ENCODE measurements at regions of chr11 and their contacts with region 1.

Region 1: GRCh38 chr11:116927163-116927974 is 89.9 kb upstream of the APOA1 start:
- DNase-seq: peak; percentile 16 to 77 (median 38)
- ATAC-seq: peak; percentile 43
- H3K4me3 ChIP-seq: no peak overlapping the region
- H3K4me3 Mint-ChIP-seq: peak overlapping the region; percentile 43
- H3K27ac ChIP-seq: peak overlapping the region; percentile 79 to 94
- H3K27ac Mint-ChIP-seq: peak overlapping the region; percentile 90
- H3K4me1 ChIP-seq: peaks cover 68% of the 10 kb centered on the region
- H3K4me1 Mint-ChIP-seq: peaks cover 91% of the 10 kb centered on the region
- H3K27me3 ChIP-seq: no peaks in the 10 kb centered on the region
- H3K27me3 Mint-ChIP-seq: no peaks in the 10 kb centered on the region
- CTCF ChIP-seq: peak; percentile 56

Region 2: GRCh38 chr11:116742104-116742503 is 185.3 kb before region 1 on chr11:
- CTCF ChIA-PET with region 1: no interaction called
- POLR2A ChIA-PET with region 1: no interaction called
- intact Hi-C with region 1: no loop called
- DNase-seq: no peak
- ATAC-seq: no peak
- H3K4me3 ChIP-seq: no peak overlapping the region
- H3K4me3 Mint-ChIP-seq: no peak overlapping the region
- H3K27ac ChIP-seq: no peak overlapping the region
- H3K27ac Mint-ChIP-seq: no peak overlapping the region
- H3K4me1 ChIP-seq: no peaks in the 10 kb centered on the region
- H3K4me1 Mint-ChIP-seq: no peaks in the 10 kb centered on the region
- H3K27me3 ChIP-seq: no peaks in the 10 kb centered on the region
- H3K27me3 Mint-ChIP-seq: no peaks in the 10 kb centered on the region
- CTCF ChIP-seq: no peak

Region 3: DNA sequence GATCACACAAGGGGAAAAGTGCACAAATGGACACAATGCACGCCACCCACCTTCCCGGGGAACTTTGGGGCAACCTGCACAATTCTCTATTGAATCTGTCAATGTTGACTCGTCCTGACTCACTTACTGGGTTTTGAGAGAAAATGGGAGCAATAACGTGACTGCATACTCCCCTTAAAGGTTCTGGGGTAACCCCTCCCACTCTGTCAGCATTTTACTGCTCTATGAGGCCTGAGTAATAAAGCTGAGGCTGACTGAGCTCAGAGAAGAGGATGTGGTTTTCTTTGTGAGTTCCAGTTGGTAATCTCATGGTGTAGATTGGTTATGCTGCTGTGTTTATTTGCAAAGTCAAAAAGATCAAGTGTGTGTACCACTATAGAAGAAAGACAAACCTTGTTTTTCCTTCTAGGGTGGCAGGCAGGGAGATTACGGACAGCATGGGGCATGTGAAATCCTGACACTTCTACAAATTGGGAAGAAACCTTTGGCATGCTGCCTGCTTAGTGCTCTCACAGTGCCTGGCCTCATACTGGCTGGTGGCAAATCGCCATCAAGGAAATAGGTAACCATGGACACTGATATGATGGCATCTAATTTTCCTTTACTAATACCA is 73.8 kb before region 1 on chr11:
- CTCF ChIA-PET with region 1: no interaction called
- POLR2A ChIA-PET with region 1: interaction called, 7 read pairs
- intact Hi-C with region 1: loop called in 1 of 2 experiments (anchors 10 kb)
- DNase-seq: peak in 12 of 14 experiments; percentile 15 to 93 (median 52)
- ATAC-seq: peak; percentile 95
- H3K4me3 ChIP-seq: peak overlapping the region; percentile 13
- H3K4me3 Mint-ChIP-seq: peak overlapping the region; percentile 18
- H3K27ac ChIP-seq: peak overlapping the region; percentile 69 to 82
- H3K27ac Mint-ChIP-seq: peak overlapping the region; percentile 82
- H3K4me1 ChIP-seq: peaks cover 68% of the 10 kb centered on the region
- H3K4me1 Mint-ChIP-seq: peaks cover 74% of the 10 kb centered on the region
- H3K27me3 ChIP-seq: no peaks in the 10 kb centered on the region
- H3K27me3 Mint-ChIP-seq: no peaks in the 10 kb centered on the region
- CTCF ChIP-seq: no peak

Region 4: GRCh38 chr11:116972691-116973090 is 45.3 kb after region 1 on chr11:
- CTCF ChIA-PET with region 1: no interaction called
- POLR2A ChIA-PET with region 1: no interaction called
- intact Hi-C with region 1: loop called in 1 of 2 experiments (anchors 5 kb)
- DNase-seq: no peak
- ATAC-seq: no peak
- H3K4me3 ChIP-seq: no peak overlapping the region
- H3K4me3 Mint-ChIP-seq: no peak overlapping the region
- H3K27ac ChIP-seq: no peak overlapping the region
- H3K27ac Mint-ChIP-seq: no peak overlapping the region
- H3K4me1 ChIP-seq: no peaks in the 10 kb centered on the region
- H3K4me1 Mint-ChIP-seq: peaks cover 59% of the 10 kb centered on the region
- H3K27me3 ChIP-seq: no peaks in the 10 kb centered on the region
- H3K27me3 Mint-ChIP-seq: no peaks in the 10 kb centered on the region
- CTCF ChIP-seq: no peak

Region 5: DNA sequence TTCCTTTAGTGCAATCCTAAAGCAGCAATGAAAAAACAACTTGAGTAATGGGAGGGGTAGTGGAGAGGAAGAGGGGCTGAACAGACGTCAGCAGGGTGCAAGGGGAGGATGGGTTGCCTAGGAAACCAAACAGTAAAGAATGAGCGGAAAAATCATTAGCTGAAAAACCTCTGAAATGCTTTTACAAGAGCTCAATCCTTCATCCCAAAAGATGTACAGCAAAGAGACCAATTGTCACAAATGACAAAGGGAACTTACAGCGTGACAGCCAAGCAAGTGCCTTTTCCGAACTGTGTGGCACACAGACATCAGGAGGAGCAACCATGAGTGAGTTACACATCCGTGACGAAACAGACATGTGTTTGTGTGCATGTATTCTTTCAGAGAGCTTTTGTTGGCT is 66.2 kb after region 1 on chr11:
- CTCF ChIA-PET with region 1: interaction called, 3 read pairs
- POLR2A ChIA-PET with region 1: interaction called, 4 read pairs
- intact Hi-C with region 1: loop called in 1 of 2 experiments (anchors 5 kb)
- DNase-seq: peak in 9 of 14 experiments; percentile 4 to 82 (median 21)
- ATAC-seq: peak; percentile 74
- H3K4me3 ChIP-seq: no peak overlapping the region
- H3K4me3 Mint-ChIP-seq: peak overlapping the region; percentile 47
- H3K27ac ChIP-seq: no peak overlapping the region
- H3K27ac Mint-ChIP-seq: peak overlapping the region; percentile 73
- H3K4me1 ChIP-seq: peaks cover 34% of the 10 kb centered on the region
- H3K4me1 Mint-ChIP-seq: peaks cover 66% of the 10 kb centered on the region
- H3K27me3 ChIP-seq: no peaks in the 10 kb centered on the region
- H3K27me3 Mint-ChIP-seq: no peaks in the 10 kb centered on the region
- CTCF ChIP-seq: no peak

Region 6: DNA sequence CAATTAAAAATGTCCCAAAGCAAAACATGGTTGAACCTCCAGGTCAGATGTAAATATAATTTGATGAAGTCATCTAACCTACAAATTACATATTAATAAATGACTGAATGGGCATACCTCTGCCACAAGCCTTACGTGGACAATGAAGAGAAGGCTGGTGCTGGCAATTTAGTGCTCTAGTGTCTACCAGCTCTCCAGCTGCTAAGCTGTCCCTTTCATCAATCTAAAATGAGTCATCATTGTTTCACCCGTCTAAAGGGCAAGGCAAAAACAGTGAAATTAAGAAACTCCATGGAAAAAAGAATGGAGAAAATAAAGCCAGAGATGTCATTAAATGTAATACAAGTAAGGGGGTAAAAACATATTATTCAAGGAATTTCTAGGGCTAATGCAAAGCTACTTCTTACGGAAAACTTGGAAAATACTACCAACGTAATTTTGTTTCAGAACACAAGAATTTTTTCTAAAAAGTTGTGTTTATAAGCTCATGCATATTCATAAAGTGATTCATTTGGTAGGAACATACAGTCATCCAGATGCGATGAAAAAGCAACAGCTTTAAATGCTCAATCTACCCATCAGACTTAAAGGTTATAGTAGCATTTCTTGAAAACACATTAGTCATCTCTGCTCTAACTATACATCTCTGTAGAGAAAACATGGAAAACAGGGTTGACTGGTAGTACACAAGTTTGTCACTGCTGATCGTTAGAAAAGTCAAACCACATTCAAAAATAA is 99.4 kb after region 1 on chr11:
- CTCF ChIA-PET with region 1: interaction called, 3 read pairs
- POLR2A ChIA-PET with region 1: interaction called, 3 read pairs
- intact Hi-C with region 1: loop called in 1 of 2 experiments (anchors 5 kb)
- DNase-seq: no peak
- ATAC-seq: no peak
- H3K4me3 ChIP-seq: no peak overlapping the region
- H3K4me3 Mint-ChIP-seq: no peak overlapping the region
- H3K27ac ChIP-seq: no peak overlapping the region
- H3K27ac Mint-ChIP-seq: no peak overlapping the region
- H3K4me1 ChIP-seq: peaks cover 28% of the 10 kb centered on the region
- H3K4me1 Mint-ChIP-seq: peaks cover 67% of the 10 kb centered on the region
- H3K27me3 ChIP-seq: no peaks in the 10 kb centered on the region
- H3K27me3 Mint-ChIP-seq: no peaks in the 10 kb centered on the region
- CTCF ChIP-seq: no peak

Region 7: DNA sequence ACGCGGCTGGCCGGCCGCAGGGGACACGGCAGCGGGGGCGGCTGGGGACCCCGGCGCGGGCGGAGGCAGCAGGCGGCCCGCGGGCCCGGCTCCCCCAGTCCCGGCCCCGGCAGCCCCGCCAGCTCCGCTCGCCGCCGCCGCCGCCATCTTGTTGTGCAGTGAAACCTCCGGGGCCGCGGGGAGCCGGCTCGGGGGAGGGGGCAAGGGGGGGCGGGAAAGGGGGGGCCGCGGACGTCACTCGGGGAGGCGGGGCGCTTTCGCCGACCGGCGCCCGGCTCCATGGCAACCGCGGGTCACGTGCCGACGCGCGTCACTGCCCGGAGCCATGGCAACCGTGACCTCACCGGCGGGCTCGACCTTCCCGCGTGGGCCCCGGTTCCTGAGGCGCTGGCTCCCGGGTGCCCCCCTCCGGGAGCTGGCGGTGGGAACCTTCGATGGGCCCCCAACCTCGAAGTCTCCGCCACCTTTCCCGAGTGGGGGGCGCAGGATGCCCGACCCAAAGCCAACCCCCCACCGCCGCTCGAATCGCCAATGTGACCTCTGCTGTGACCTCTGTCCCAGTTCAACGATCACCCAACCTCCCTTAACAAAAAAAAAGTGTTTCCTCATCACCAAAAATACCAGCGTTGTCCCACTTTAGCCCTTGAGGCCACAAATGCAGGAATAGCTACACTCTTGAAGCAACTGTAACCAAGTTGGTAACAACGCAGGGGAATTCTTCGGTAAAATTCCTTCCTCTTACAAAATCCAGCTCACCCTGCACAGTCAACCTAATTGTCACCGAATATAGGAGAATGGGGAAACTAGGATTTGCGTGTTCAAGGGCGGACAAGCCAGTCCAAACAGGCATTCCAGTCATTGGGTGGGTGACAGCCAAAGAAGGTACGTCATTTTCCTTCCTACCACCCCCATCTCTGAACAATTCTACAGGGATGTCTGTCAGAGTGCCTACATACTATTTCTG is 171.2 kb after region 1 on chr11 and contains the start of gene SIK3:
- CTCF ChIA-PET with region 1: interaction called, 3 read pairs
- POLR2A ChIA-PET with region 1: interaction called, 22 read pairs
- intact Hi-C with region 1: loop called (anchors 2 kb)
- DNase-seq: peak; percentile 90 to 98 (median 93)
- ATAC-seq: peak; percentile 69
- H3K4me3 ChIP-seq: peak within 1 kb of the TSS; percentile 89
- H3K4me3 Mint-ChIP-seq: peak within 1 kb of the TSS; percentile 100
- H3K27ac ChIP-seq: peak within 1 kb of the TSS; percentile 81 to 95
- H3K27ac Mint-ChIP-seq: peak within 1 kb of the TSS; percentile 100
- H3K4me1 ChIP-seq: peaks cover 38% of the 10 kb centered on the region
- H3K4me1 Mint-ChIP-seq: peaks cover 51% of the 10 kb centered on the region
- H3K27me3 ChIP-seq: no peaks in the 10 kb centered on the region
- H3K27me3 Mint-ChIP-seq: no peaks in the 10 kb centered on the region
- CTCF ChIP-seq: peak; percentile 67
- total RNA-seq, gene SIK3: 81.4 to 86.1 TPM